ENCODE measurements at regions of chr1 and their contacts with region 1.

Region 1: GRCh38 chr1:155978325-155978972 is at the start of gene ARHGEF2:
- DNase-seq: peak; percentile 65 to 86 (median 72)
- H3K4me3 ChIP-seq: peak within 1 kb of the TSS; percentile 91
- H3K4me3 Mint-ChIP-seq: peak within 1 kb of the TSS; percentile 92 to 100 (median 98)
- H3K27ac ChIP-seq: peak within 1 kb of the TSS; percentile 94
- H3K27ac Mint-ChIP-seq: peak within 1 kb of the TSS; percentile 86 to 99 (median 96)
- H3K4me1 ChIP-seq: peaks cover 71% of the 10 kb centered on the region
- H3K4me1 Mint-ChIP-seq: peaks cover 74 to 86% (median 75%) of the 10 kb centered on the region in 3 donors
- H3K27me3 ChIP-seq: no peaks in the 10 kb centered on the region
- H3K27me3 Mint-ChIP-seq: no peaks in the 10 kb centered on the region
- total RNA-seq, gene ARHGEF2: 168 to 176 TPM

Region 2: DNA sequence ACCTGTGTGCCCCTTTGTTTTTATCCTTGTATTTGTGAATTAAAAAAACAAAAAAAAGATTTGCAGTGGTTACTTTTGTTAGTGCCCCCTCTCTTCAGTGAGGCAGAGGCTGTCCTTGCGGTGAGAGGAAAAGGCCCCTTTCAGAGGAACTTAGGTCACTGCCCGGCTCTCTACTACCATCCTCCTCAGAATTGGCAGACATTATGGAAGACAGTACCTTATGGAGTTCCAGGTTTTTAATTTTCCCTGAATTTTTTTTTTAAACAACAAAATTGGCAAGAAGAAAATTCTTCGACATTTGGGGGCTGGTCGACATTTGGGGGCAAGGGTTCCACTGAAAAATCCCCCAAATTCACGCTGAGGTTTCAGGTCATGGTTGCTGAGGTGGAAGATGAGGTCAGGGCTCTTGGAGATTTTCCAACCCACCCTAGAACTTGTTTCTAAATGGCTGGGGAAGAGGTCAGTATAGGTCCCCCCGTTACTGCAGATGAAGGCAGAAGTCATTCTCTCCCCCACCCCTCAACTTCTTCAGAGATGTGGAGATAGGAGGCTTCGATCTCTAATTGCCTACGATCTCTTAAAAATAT is 31.7 kb before region 1 on chr1:
- CTCF ChIA-PET with region 1: interaction called, 18 read pairs
- POLR2A ChIA-PET with region 1: interaction called, 4 read pairs
- DNase-seq: no peak
- H3K4me3 ChIP-seq: no peak overlapping the region
- H3K4me3 Mint-ChIP-seq: peak overlapping the region; percentile 5 to 88 (median 53)
- H3K27ac ChIP-seq: peak overlapping the region; percentile 32
- H3K27ac Mint-ChIP-seq: peak overlapping the region; percentile 83 to 95 (median 90)
- H3K4me1 ChIP-seq: peaks cover 32% of the 10 kb centered on the region
- H3K4me1 Mint-ChIP-seq: peaks cover 23 to 44% (median 33%) of the 10 kb centered on the region in 3 donors
- H3K27me3 ChIP-seq: no peaks in the 10 kb centered on the region
- H3K27me3 Mint-ChIP-seq: no peaks in the 10 kb centered on the region

Region 3: DNA sequence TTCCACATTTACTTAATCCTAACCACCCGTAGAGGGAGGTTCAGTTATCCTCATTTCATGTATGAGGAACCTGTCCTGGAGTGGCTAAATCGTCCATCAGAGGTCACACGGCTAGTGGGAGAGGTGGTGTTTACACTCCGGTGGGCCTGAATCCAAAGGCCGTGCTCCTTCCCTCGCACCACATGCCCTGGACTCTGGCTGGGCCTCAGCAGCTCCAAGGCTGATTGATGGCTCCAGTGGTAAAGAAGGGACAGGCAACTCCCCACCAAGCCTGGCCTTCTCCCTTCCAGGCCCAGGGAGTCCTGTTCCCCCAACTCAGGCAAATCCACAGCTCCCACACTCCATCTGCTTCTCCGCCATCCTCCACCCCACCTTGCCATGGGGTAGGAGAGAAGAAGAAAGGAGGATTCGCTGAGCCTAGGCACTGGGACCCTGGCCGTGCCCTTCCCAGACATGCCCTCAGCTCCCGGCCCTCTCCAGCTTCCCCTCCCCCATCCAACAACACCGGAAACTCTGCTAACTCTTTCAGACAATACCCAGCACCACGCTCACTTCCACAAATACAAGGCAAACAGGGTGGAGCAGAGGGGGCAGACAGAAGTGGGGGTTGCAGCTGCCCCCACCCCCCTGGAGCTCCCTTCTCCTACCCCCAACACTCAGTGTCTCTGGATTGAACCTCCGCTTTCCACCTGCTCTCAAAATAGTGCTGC is 11.0 kb before region 1 on chr1:
- CTCF ChIA-PET with region 1: interaction called, 34 read pairs
- POLR2A ChIA-PET with region 1: interaction called, 31 read pairs
- DNase-seq: peak in 1 of 5 donors; percentile 59
- H3K4me3 ChIP-seq: peak overlapping the region; percentile 15
- H3K4me3 Mint-ChIP-seq: peak overlapping the region; percentile 45 to 69 (median 64)
- H3K27ac ChIP-seq: no peak overlapping the region
- H3K27ac Mint-ChIP-seq: peak overlapping the region; percentile 78 to 95 (median 91)
- H3K4me1 ChIP-seq: peaks cover 69% of the 10 kb centered on the region
- H3K4me1 Mint-ChIP-seq: peaks cover 65 to 73% (median 66%) of the 10 kb centered on the region in 3 donors
- H3K27me3 ChIP-seq: no peaks in the 10 kb centered on the region
- H3K27me3 Mint-ChIP-seq: no peaks in the 10 kb centered on the region

Region 4: GRCh38 chr1:155989242-155990004 is 11.0 kb after region 1 on chr1:
- CTCF ChIA-PET with region 1: interaction called, 20 read pairs
- POLR2A ChIA-PET with region 1: interaction called, 3 read pairs
- DNase-seq: peak; percentile 64 to 86 (median 70)
- H3K4me3 ChIP-seq: no peak overlapping the region
- H3K4me3 Mint-ChIP-seq: no peak overlapping the region
- H3K27ac ChIP-seq: no peak overlapping the region
- H3K27ac Mint-ChIP-seq: peak overlapping the region in 2 of 8 donors; percentile 56 to 71
- H3K4me1 ChIP-seq: peaks cover 11% of the 10 kb centered on the region
- H3K4me1 Mint-ChIP-seq: peaks cover 10 to 14% (median 10%) of the 10 kb centered on the region in 3 donors
- H3K27me3 ChIP-seq: no peaks in the 10 kb centered on the region
- H3K27me3 Mint-ChIP-seq: no peaks in the 10 kb centered on the region